ENCODE measurements at regions of chr19 and their contacts with region 1.

Region 1: DNA sequence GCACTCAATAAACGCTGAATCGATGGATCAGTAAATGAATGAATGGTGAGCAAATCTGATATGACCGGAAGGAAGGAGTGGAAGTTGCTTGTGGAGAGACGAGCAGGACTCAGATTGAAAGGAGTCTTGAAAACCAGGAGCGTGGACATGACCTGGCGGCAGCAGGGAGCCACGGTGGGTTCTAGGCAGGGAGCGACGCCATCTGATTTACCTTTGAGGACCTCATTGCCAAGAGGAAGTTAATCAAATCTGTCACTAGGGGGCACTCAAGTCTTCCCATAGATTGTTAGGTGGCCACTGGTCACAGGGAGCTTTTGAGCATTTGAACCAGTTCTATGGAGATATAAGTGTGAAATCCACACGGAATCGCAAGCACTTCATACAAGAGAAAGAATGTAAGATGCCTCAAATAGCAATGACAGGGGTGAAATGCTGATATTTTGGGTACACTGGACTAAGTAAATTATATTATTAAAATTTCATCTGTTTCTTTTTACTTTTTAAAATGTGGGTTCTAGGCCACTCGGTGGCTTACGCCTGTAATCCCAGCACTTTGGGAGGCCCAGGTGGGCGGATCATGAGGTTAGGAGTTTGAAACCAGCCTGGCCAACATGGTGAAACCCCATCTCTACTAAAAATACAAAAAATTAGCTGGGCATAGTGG is 9.2 kb upstream of the FBN3 start:
- DNase-seq: no peak
- H3K4me3 ChIP-seq: no peak overlapping the region
- H3K27ac ChIP-seq: no peak overlapping the region
- H3K4me1 ChIP-seq: peaks cover 0 to 3% (median 0%) of the 10 kb centered on the region in 4 experiments; a peak in 2 of 7 replicates
- H3K27me3 ChIP-seq: no peaks in the 10 kb centered on the region
- CTCF ChIP-seq: peak; percentile 36 to 89 (median 85)
- EP300 ChIP-seq: no peak
- POLR2A ChIP-seq: no peak
- RAD21 ChIP-seq: peak; percentile 95 to 97

Region 2: DNA sequence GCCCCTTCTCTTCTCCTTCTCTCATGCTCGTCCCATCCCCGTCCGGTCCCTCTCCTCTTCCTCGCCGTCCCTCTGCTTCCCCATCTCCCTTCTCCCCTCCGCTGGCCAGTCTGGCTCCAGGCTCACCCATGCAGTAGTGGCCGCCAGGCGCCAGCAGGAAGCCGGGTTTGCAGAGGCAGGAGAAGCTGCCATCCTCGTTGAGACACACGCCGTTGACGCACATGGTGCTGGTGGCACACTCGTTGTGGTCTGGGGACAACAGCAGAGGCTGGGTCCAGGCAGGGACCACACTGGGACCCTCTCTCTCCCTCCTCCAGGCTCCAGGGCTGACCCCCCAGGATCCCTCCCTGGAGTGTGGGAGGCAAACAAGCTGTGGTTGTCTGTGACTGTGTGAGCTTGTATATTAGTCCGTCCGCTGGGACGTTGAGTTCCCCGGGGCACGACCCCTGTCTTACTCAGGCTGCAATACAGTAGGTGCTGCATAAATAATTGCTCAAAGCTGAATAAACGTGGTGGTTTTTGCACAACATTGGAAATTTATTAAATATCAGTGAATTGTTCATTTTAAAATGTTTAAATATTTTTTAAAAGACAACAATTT is 25.6 kb before region 1 on chr19:
- CTCF ChIA-PET with region 1: no interaction called
- POLR2A ChIA-PET with region 1: no interaction called
- DNase-seq: no peak
- H3K4me3 ChIP-seq: no peak overlapping the region
- H3K27ac ChIP-seq: no peak overlapping the region
- H3K4me1 ChIP-seq: no peaks in the 10 kb centered on the region
- H3K27me3 ChIP-seq: no peaks in the 10 kb centered on the region
- CTCF ChIP-seq: no peak
- EP300 ChIP-seq: no peak
- POLR2A ChIP-seq: no peak
- RAD21 ChIP-seq: no peak

Region 3: DNA sequence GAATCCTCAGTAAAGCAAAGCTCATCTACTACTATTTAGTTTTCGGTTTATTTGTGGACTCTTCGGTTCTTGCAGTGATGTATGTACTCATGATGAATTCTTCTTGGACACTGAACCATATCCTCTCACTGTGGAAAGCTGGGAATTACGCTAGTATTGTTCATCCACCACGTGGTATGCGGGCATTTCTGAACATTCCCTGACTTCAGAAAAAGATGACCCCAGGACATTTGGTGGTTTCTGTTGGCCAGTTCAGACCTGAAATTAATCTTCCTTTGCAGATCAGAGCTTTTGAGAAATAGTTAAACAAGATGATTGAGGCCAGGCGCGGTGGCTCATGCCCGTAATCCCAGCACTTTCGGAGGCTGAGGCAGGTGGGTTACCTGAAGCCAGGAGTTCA is 16.2 kb after region 1 on chr19:
- CTCF ChIA-PET with region 1: interaction called, 10 read pairs
- POLR2A ChIA-PET with region 1: interaction called, 3 read pairs
- DNase-seq: no peak
- H3K4me3 ChIP-seq: no peak overlapping the region
- H3K27ac ChIP-seq: no peak overlapping the region
- H3K4me1 ChIP-seq: no peaks in the 10 kb centered on the region
- H3K27me3 ChIP-seq: no peaks in the 10 kb centered on the region
- CTCF ChIP-seq: no peak
- EP300 ChIP-seq: no peak
- POLR2A ChIP-seq: no peak
- RAD21 ChIP-seq: no peak

Region 4: GRCh38 chr19:8208922-8209461 is 50.4 kb after region 1 on chr19 and contains the start of gene CERS4:
- CTCF ChIA-PET with region 1: interaction called, 11 read pairs
- POLR2A ChIA-PET with region 1: interaction called, 5 read pairs
- DNase-seq: peak; percentile 64 to 92
- H3K4me3 ChIP-seq: peak within 1 kb of the TSS; percentile 77 to 93 (median 88)
- H3K27ac ChIP-seq: peak within 1 kb of the TSS; percentile 73
- H3K4me1 ChIP-seq: peaks cover 6 to 30% (median 20%) of the 10 kb centered on the region in 4 experiments
- H3K27me3 ChIP-seq: no peaks in the 10 kb centered on the region; a peak in 1 of 7 replicates
- CTCF ChIP-seq: no peak
- EP300 ChIP-seq: no peak
- POLR2A ChIP-seq: peak in 1 of 2 experiments; percentile 52; a peak in 2 of 3 replicates
- RAD21 ChIP-seq: no peak
- total RNA-seq, gene CERS4: 88.2 and 96.5 TPM in 2 replicates

Region 5: DNA sequence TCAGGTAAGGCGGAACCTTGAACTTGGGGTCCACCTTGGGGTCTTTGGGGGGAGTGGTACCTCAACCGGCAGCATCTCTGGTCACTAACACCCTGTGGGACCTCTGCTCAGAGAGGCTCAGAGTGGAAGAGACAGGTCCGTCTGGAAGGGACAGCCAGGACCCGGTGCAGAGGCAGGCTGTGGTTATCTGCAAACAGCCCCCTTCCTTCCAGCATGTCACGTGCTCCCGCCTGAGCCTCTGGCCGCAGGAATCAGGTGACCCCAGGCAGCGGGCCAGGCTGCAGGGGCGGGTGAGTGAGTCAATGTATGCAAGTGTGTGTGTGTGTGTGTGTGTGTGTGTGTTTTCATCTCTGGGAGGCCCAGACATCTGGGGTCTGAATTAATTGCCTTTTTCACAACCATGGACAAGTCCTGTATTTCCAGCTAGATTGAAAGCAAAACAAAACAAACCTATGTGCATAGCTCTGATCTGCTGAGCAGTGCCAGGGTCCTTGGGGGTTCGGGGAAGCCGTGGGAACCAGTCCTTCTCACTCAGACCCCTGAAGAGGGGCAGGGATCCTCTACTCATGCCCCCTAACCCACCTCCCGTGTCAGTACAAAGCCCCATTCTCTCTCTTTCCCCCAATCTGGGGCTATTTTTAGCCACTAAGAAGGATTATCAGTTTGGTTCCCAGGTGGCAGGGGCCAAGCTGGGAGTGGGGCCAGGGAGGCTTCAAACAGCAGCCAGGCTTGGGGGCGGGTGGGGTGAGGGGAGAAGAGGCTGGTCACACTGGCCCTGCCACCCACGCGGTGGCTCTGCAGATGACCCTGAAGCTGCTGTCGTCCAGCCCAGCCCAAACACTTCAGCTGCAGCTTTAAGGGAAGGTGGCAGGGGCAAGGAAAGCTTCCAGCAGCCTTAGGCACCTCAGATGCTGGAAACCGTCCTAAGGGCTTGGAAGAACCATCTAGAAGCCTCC is 82.0 kb after region 1 on chr19:
- CTCF ChIA-PET with region 1: interaction called, 23 read pairs
- POLR2A ChIA-PET with region 1: interaction called, 7 read pairs
- DNase-seq: peak; percentile 51 to 62
- H3K4me3 ChIP-seq: peak overlapping the region in 1 of 4 experiments; percentile 5; a peak in 2 of 8 replicates
- H3K27ac ChIP-seq: 0 out of 2 replicates have a peak overlapping the region, but pooled peaks have one; percentile 43
- H3K4me1 ChIP-seq: peaks cover 0 to 17% (median 6%) of the 10 kb centered on the region in 4 experiments; a peak in 4 of 7 replicates
- H3K27me3 ChIP-seq: no peaks in the 10 kb centered on the region
- CTCF ChIP-seq: no peak
- EP300 ChIP-seq: no peak
- POLR2A ChIP-seq: 0 out of 3 replicates have a peak, but pooled peaks of 1 of the 2 experiments have one; percentile 15
- RAD21 ChIP-seq: no peak

Region 6: DNA sequence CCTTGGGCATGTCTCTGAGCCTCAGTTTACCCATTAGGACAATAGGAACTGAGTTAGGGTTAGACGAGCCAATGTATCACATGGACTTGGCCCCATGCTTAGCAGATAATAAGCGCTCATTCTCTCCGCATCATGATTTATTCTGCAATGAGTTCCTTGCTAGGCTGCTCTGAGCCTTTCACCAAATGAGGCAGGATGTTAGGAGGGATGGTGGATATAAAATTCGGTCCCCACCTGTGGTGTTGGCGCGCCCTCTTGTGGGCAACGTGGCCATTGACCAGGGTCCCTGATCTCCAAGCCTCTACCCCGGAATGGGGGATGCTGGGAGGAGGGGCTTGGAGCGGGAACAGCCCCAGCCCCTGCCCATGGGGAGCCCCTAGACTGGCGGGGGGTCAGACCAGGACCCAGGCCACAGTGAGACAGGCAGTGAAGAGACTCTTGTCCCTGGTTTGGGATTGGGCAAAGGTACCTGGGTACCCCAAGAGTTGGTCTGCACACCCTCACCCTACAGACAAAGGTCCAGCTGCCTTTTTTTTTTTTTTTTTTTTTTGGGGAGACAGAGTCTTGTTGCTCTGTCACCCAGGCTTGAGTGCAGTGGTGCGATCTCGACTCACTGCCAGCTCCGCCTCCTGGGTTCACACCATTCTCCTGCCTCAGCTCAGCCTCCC is 94.5 kb after region 1 on chr19:
- CTCF ChIA-PET with region 1: interaction called, 25 read pairs
- POLR2A ChIA-PET with region 1: interaction called, 9 read pairs
- DNase-seq: peak; percentile 66 to 98
- H3K4me3 ChIP-seq: no peak overlapping the region
- H3K27ac ChIP-seq: no peak overlapping the region
- H3K4me1 ChIP-seq: peaks cover 0 to 2% (median 0%) of the 10 kb centered on the region in 4 experiments; a peak in 1 of 7 replicates
- H3K27me3 ChIP-seq: no peaks in the 10 kb centered on the region
- CTCF ChIP-seq: peak; percentile 95 to 98 (median 97)
- EP300 ChIP-seq: peak in 1 of 2 experiments; percentile 12; a peak in 1 of 3 replicates
- POLR2A ChIP-seq: no peak
- RAD21 ChIP-seq: peak; percentile 99 to 100

Region 7: DNA sequence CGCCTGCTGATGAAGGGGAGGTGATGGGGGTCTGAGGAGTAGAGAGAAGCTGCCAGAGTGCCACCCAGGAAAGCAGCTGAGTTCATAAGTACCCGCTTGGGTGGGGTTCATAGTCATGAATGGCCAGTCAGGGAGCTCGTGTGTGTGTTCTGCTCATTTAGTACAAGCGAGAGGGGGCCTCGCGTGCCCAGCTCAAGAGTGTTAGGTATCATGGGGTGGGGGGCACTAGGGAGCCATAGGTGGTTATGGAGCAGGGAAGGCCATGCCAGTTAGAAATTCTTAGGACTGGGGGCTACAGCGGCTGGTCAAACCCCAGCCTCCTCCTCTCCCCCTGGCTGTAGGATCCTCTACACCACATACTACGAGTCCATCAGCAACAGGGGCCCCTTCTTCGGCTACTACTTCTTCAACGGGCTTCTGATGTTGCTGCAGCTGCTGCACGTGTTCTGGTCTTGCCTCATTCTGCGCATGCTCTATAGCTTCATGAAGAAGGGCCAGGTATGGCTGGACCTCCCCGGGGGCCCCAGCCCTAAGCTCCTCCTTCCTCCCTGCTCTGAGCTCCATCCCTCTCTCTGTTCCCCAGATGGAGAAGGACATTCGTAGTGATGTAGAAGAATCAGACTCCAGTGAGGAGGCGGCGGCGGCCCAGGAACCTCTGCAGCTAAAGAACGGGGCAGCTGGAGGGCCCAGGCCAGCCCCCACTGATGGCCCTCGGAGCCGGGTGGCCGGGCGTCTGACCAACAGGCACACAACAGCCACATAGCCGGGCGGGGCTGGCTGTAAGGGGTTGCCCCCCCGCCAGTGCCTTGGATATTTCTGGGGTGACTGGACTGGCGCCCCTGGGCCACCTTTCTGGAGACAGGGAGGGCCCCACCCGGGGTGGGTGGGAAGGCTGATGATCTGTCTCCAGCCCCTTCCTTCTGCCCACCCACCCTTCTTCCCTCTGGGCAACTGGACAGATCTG is 103.1 kb after region 1 on chr19:
- CTCF ChIA-PET with region 1: interaction called, 10 read pairs
- POLR2A ChIA-PET with region 1: no interaction called
- DNase-seq: no peak
- H3K4me3 ChIP-seq: no peak overlapping the region
- H3K27ac ChIP-seq: no peak overlapping the region
- H3K4me1 ChIP-seq: peaks cover 0 to 4% (median 0%) of the 10 kb centered on the region in 4 experiments; a peak in 3 of 7 replicates
- H3K27me3 ChIP-seq: no peaks in the 10 kb centered on the region
- CTCF ChIP-seq: no peak
- EP300 ChIP-seq: no peak
- POLR2A ChIP-seq: peak in 1 of 2 experiments; percentile 18; a peak in 1 of 3 replicates
- RAD21 ChIP-seq: no peak

Measured in H1 (cell line).